ENCODE measurements at regions of chr2 and their contacts with region 1.

Region 1: GRCh38 chr2:46294176-46294836 is 2.9 kb upstream of the EPAS1 start:
- DNase-seq: peak in 1 of 2 experiments; percentile 71
- H3K4me3 ChIP-seq: no peak overlapping the region
- H3K27ac ChIP-seq: no peak overlapping the region
- H3K4me1 ChIP-seq: peaks cover 0 to 10% (median 7%) of the 10 kb centered on the region in 4 experiments; a peak in 4 of 7 replicates
- H3K27me3 ChIP-seq: peaks cover 30 to 45% (median 39%) of the 10 kb centered on the region in 4 experiments
- CTCF ChIP-seq: peak; percentile 70 to 73 (median 72)
- EP300 ChIP-seq: no peak
- POLR2A ChIP-seq: no peak
- RAD21 ChIP-seq: peak; percentile 76 to 79

Region 2: DNA sequence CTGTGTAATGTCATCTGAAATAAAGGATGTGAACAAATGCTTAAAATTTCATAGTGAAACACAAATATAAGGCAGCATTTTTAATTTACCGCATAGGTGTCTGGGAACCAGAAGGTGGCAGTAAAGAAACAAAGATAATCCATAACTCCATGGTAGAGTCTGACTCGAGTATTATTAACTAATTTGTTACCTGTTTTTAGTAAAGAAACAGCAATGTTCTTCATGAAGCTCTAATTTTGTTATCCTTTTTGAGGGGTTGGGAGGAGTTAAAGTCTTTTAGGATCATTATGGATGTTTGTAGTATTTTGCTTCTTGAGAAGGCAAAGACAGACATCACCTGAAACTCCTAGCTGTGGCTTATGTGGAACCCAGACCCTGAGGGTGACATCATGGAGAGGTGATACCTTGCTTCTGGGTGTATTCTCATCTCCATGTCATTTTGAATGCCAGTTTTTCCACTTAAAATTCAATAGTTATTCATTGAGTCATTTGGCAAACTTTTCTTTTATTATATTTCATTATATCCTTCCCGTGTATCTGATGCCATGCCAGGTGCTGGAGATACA is 283.3 kb before region 1 on chr2:
- CTCF ChIA-PET with region 1: interaction called, 11 read pairs
- POLR2A ChIA-PET with region 1: no interaction called
- DNase-seq: peak in 1 of 2 experiments; percentile 14
- H3K4me3 ChIP-seq: no peak overlapping the region
- H3K27ac ChIP-seq: no peak overlapping the region
- H3K4me1 ChIP-seq: peaks cover 3 to 9% (median 5%) of the 10 kb centered on the region in 4 experiments; a peak in 6 of 7 replicates
- H3K27me3 ChIP-seq: no peaks in the 10 kb centered on the region
- CTCF ChIP-seq: peak in 2 of 3 experiments; percentile 38 to 53; a peak in 2 of 4 replicates
- EP300 ChIP-seq: no peak
- POLR2A ChIP-seq: no peak
- RAD21 ChIP-seq: peak; percentile 66 to 71

Region 3: GRCh38 chr2:46187112-46187618 is 107.1 kb before region 1 on chr2:
- CTCF ChIA-PET with region 1: interaction called, 16 read pairs
- POLR2A ChIA-PET with region 1: no interaction called
- DNase-seq: no peak
- H3K4me3 ChIP-seq: no peak overlapping the region
- H3K27ac ChIP-seq: no peak overlapping the region
- H3K4me1 ChIP-seq: no peaks in the 10 kb centered on the region
- H3K27me3 ChIP-seq: no peaks in the 10 kb centered on the region
- CTCF ChIP-seq: no peak
- EP300 ChIP-seq: no peak
- POLR2A ChIP-seq: no peak
- RAD21 ChIP-seq: no peak

Region 4: GRCh38 chr2:46232860-46233259 is 61.4 kb before region 1 on chr2:
- CTCF ChIA-PET with region 1: interaction called, 13 read pairs
- POLR2A ChIA-PET with region 1: interaction called, 3 read pairs
- DNase-seq: no peak
- H3K4me3 ChIP-seq: no peak overlapping the region
- H3K27ac ChIP-seq: no peak overlapping the region
- H3K4me1 ChIP-seq: peaks cover 10 to 19% (median 12%) of the 10 kb centered on the region in 4 experiments
- H3K27me3 ChIP-seq: no peaks in the 10 kb centered on the region
- CTCF ChIP-seq: no peak
- EP300 ChIP-seq: no peak
- POLR2A ChIP-seq: no peak
- RAD21 ChIP-seq: no peak

Region 5: GRCh38 chr2:46264442-46264841 is 29.9 kb before region 1 on chr2:
- CTCF ChIA-PET with region 1: no interaction called
- POLR2A ChIA-PET with region 1: no interaction called
- DNase-seq: no peak
- H3K4me3 ChIP-seq: no peak overlapping the region
- H3K27ac ChIP-seq: no peak overlapping the region
- H3K4me1 ChIP-seq: no peaks in the 10 kb centered on the region
- H3K27me3 ChIP-seq: no peaks in the 10 kb centered on the region; a peak in 1 of 7 replicates
- CTCF ChIP-seq: no peak
- EP300 ChIP-seq: no peak
- POLR2A ChIP-seq: no peak
- RAD21 ChIP-seq: no peak

Region 6: DNA sequence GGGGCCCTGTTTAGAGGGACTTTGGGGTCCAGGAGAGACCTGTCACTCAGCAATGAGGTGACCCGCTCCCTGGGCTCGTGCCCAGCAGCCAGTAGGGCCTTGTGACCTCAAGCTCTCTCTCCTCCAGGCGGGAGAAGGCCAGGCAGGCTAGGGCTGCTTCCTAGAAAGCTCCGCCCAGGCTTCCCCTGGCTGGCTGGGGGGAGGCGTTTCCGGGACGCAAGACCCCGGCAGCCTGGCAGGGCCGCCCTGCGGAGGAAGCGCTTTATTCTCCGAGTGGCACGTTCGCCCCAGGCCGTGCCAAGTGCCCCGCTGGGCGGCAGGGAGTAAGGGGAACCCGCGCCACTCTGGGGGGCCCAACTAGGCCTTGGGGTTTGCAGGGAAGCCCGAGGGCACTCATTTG is 18.3 kb before region 1 on chr2:
- CTCF ChIA-PET with region 1: interaction called, 13 read pairs
- POLR2A ChIA-PET with region 1: no interaction called
- DNase-seq: peak in 1 of 2 experiments; percentile 71
- H3K4me3 ChIP-seq: no peak overlapping the region
- H3K27ac ChIP-seq: no peak overlapping the region
- H3K4me1 ChIP-seq: peaks cover 0 to 2% (median under 1%) of the 10 kb centered on the region in 4 experiments; a peak in 2 of 7 replicates
- H3K27me3 ChIP-seq: no peaks in the 10 kb centered on the region; a peak in 1 of 7 replicates
- CTCF ChIP-seq: no peak
- EP300 ChIP-seq: no peak
- POLR2A ChIP-seq: no peak
- RAD21 ChIP-seq: no peak

Region 7: GRCh38 chr2:46306330-46306751 is 12.0 kb after region 1 on chr2:
- CTCF ChIA-PET with region 1: interaction called, 15 read pairs
- POLR2A ChIA-PET with region 1: no interaction called
- DNase-seq: no peak
- H3K4me3 ChIP-seq: no peak overlapping the region
- H3K27ac ChIP-seq: no peak overlapping the region
- H3K4me1 ChIP-seq: peaks cover 0 to 8% (median under 1%) of the 10 kb centered on the region in 4 experiments; a peak in 3 of 7 replicates
- H3K27me3 ChIP-seq: peaks cover 0 to 6% (median 2%) of the 10 kb centered on the region in 4 experiments; a peak in 4 of 7 replicates
- CTCF ChIP-seq: no peak
- EP300 ChIP-seq: no peak
- POLR2A ChIP-seq: no peak
- RAD21 ChIP-seq: no peak

Region 8: DNA sequence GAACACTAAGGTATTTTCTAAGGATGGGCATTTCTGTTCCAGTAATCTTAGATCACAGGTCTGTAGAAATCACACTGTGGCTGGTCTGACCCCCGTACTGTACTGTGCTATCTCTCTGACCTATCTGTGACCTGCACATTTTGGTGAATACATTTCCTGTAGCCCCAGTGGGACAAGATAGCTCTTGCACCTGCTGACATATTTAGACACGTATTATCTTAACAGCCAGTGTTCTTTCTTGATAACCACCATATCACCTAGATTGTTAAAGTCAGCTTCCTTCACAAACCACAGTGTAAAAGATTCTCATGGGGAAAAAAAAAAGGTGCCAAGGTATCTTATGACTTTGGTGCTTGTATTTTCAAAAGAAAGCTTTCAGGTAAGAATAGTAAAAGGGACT is 145.3 kb after region 1 on chr2:
- CTCF ChIA-PET with region 1: no interaction called
- POLR2A ChIA-PET with region 1: no interaction called
- DNase-seq: no peak
- H3K4me3 ChIP-seq: no peak overlapping the region
- H3K27ac ChIP-seq: no peak overlapping the region
- H3K4me1 ChIP-seq: peaks cover 0 to 6% (median 5%) of the 10 kb centered on the region in 4 experiments; a peak in 4 of 7 replicates
- H3K27me3 ChIP-seq: no peaks in the 10 kb centered on the region
- CTCF ChIP-seq: no peak
- EP300 ChIP-seq: no peak
- POLR2A ChIP-seq: no peak
- RAD21 ChIP-seq: no peak

Measured in H1 (cell line).